Heart left ventricle (tissue), 16 donors: ENCODE measurements at regions of chr11 and their contacts with region 1.

Region 1: DNA sequence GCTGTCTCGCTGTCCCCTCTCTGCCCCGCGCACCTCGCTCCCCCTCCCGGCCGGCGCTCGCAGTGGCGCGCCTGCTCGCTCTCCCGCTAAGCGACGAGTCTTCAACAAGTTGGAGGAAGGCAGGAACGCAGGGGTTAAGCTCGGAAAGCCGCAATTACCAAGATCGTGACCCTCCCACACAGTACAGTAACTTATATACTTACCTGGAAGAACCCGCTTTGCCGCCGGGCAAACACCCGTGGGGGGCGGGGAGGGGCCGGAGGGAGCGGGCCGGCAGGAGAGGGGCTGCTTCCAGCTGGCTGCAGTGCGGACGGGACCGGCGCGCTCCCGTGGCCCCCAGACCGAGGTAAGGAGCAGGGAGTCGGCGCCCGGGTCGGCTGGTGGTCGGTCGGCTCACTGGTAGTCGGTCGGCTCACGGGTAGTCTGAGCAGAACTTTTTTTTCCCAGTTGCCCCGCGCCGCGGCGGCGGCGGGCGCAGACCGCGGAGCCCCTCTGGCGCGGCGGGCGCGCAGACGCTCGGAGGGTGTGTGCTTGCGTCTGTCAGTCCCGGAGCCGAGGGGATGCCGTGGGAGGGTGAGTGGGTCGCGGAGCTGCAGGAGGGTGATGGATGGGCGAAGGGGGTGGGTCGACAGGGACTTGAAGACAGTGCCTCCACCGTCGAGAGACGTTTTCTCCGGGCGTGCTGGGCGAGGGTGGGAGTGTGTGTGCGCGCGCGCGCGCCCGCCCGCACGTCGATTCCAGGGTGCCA is 101.2 kb upstream of the HSD17B12 start:
- DNase-seq: peak in 1 of 5 donors; percentile 62
- ATAC-seq: peak in 1 of 4 donors; percentile 27
- H3K4me3 ChIP-seq: peak overlapping the region; percentile 30 to 68 (median 54)
- H3K27ac ChIP-seq: no peak overlapping the region
- H3K4me1 ChIP-seq: peaks cover 0 to 81% (median 38%) of the 10 kb centered on the region in 12 donors
- H3K27me3 ChIP-seq: peaks cover 45 to 100% (median 79%) of the 10 kb centered on the region in 9 donors
- CTCF ChIP-seq: peak in 6 of 12 donors; percentile 11 to 30 (median 18)
- POLR2A ChIP-seq: no peak

Region 2: GRCh38 chr11:43367382-43368178 is 211.8 kb before region 1 on chr11:
- intact Hi-C with region 1: no loop called
- DNase-seq: no peak
- ATAC-seq: peak in 1 of 4 donors; percentile 22
- H3K4me3 ChIP-seq: no peak overlapping the region
- H3K27ac ChIP-seq: no peak overlapping the region
- H3K4me1 ChIP-seq: peaks cover 0 to 34% (median 6%) of the 10 kb centered on the region in 12 donors
- H3K27me3 ChIP-seq: no peaks in the 10 kb centered on the region
- CTCF ChIP-seq: no peak
- POLR2A ChIP-seq: no peak

Region 3: GRCh38 chr11:43680521-43681400 is 101.4 kb after region 1 on chr11 and contains the start of gene HSD17B12:
- intact Hi-C with region 1: loop called in 1 of 10 experiments (anchors 10 kb)
- DNase-seq: peak; percentile 99 to 100 (median 100)
- ATAC-seq: peak; percentile 100
- H3K4me3 ChIP-seq: peak within 1 kb of the TSS; percentile 75 to 98 (median 90)
- H3K27ac ChIP-seq: peak within 1 kb of the TSS; percentile 42 to 98 (median 92)
- H3K4me1 ChIP-seq: peaks cover 0 to 43% (median 24%) of the 10 kb centered on the region in 12 donors
- H3K27me3 ChIP-seq: no peaks in the 10 kb centered on the region
- CTCF ChIP-seq: peak in 1 of 12 donors; percentile 26
- POLR2A ChIP-seq: peak in 1 of 2 donors; percentile 93
- total RNA-seq, gene HSD17B12: 40.5 to 114 (median 80.1) TPM

Region 4: DNA sequence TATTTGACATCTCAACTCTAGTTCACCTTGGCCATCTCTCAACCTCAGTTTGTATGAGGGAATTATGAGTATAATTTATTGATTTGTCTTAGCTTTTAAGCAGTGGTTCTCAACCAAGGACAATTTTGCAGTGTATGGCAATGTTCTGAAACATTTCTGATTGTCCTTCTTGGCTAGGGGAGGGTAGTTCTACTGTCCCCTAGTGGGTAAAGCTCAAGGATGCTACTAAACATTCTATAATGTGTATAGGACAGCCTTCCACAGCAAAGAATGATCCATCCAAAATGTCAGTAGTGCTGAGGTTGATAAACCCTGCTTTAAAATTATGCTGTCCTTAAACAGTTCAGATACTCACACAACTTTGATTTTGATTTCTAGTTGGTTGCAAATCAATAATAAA is 223.2 kb after region 1 on chr11:
- intact Hi-C with region 1: loop called in 2 of 10 experiments (anchors 10 kb)
- DNase-seq: no peak
- ATAC-seq: no peak
- H3K4me3 ChIP-seq: no peak overlapping the region
- H3K27ac ChIP-seq: no peak overlapping the region
- H3K4me1 ChIP-seq: no peaks in the 10 kb centered on the region
- H3K27me3 ChIP-seq: no peaks in the 10 kb centered on the region
- CTCF ChIP-seq: peak in 5 of 12 donors; percentile 13 to 31 (median 16)
- POLR2A ChIP-seq: no peak

Region 5: GRCh38 chr11:43830928-43831440 is 251.6 kb after region 1 on chr11:
- intact Hi-C with region 1: loop called in 1 of 10 experiments (anchors 10 kb)
- DNase-seq: peak in 1 of 5 donors; percentile 46
- ATAC-seq: peak in 3 of 4 donors; percentile 24 to 89 (median 85)
- H3K4me3 ChIP-seq: no peak overlapping the region
- H3K27ac ChIP-seq: peak overlapping the region in 2 of 12 donors; percentile 24
- H3K4me1 ChIP-seq: peaks cover 0 to 20% (median 3%) of the 10 kb centered on the region in 12 donors
- H3K27me3 ChIP-seq: no peaks in the 10 kb centered on the region
- CTCF ChIP-seq: no peak
- POLR2A ChIP-seq: no peak